ENCODE measurements at regions of chr1 and their contacts with region 1.

Region 1: DNA sequence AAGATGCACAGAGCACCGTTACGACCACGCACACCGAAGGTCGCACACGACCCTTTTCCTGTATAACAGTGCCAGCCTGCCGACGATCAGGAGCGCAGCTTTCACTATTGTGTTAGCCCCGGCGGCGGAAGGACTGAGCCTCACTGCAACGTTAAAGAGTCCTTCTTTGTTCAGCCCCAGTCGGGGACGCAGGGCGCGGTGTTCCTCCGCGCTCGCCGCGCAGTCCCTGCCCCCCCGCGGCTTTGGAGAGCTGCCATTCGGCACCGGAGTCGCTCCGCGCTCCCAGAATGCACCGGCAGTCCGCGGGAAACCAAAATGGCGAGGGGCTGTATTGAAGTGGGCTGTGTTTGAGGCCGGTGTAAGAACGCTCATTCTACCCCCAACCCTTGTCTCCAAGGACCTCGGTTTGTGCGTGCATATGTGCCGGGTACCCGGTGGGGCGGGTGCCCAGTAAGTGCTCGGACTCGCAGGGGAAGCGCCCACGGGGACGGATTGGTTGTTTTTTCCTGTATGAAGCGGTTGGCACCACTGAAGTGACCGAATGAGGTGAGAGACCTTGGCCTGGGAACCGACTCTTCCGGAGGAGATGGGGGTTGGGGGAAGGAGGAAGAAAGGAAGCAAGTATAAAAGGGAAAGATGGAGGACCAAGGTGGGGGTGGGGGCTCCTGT is at the start of gene MTF2:
- DNase-seq: peak; percentile 84
- ATAC-seq: peak; percentile 84
- H3K4me3 ChIP-seq: peak within 1 kb of the TSS; percentile 96
- H3K27ac ChIP-seq: peak within 1 kb of the TSS; percentile 93
- H3K4me1 ChIP-seq: no peaks in the 10 kb centered on the region
- H3K27me3 ChIP-seq: no peaks in the 10 kb centered on the region
- CTCF ChIP-seq: 0 out of 6 replicates have a peak, but pooled peaks of 1 of the 3 experiments have one; percentile 1
- EP300 ChIP-seq: peak; percentile 42 to 48; a peak in 3 of 4 replicates
- POLR2A ChIP-seq: peak; percentile 97
- RAD21 ChIP-seq: no peak
- polyA plus RNA-seq, gene MTF2: 22.6 to 30.6 TPM

Region 2: DNA sequence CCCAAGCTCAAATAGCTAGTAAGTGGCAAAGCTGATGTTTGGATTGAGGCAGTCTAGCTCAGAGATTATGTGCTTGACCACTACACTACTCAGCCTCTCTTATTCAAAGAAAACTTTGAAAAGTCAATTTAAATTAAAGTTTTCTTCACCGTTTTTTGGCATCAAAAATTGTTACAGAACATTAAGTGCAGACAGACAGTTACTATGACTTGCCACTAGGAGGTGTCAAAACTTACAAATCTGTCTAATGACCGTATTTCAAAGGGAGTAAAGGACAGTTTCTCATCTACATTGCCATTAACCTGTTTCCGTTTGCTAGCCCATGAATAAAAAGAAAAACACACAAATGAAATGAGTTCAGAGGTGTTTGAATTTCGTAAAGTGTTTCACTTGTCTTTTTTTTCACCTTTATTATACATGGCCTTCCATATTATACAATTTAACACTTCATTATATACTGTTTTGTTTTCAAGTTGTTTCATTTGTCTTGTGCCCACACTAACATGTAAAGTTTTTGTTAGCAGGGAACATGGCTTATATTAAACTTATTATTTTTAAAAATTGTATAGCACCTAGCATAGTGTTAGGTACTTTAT is 57.5 kb before region 1 on chr1:
- CTCF ChIA-PET with region 1: interaction called, 19 read pairs
- POLR2A ChIA-PET with region 1: no interaction called
- RAD21 ChIA-PET with region 1: interaction called, 4 read pairs
- SMC1A ChIA-PET with region 1: interaction called, 7 read pairs
- in situ Hi-C with region 1: no loop called
- intact Hi-C with region 1: no loop called
- DNase-seq: no peak
- ATAC-seq: peak; percentile 94
- H3K4me3 ChIP-seq: no peak overlapping the region
- H3K27ac ChIP-seq: no peak overlapping the region
- H3K4me1 ChIP-seq: no peaks in the 10 kb centered on the region; the same call in 1 of the 2 replicates
- H3K27me3 ChIP-seq: no peaks in the 10 kb centered on the region; a peak in 1 of 4 replicates
- CTCF ChIP-seq: peak; percentile 70 to 78 (median 71)
- EP300 ChIP-seq: no peak
- POLR2A ChIP-seq: no peak
- RAD21 ChIP-seq: peak; percentile 93

Region 3: GRCh38 chr1:93061895-93062792 is 17.0 kb before region 1 on chr1:
- CTCF ChIA-PET with region 1: interaction called, 19 read pairs
- POLR2A ChIA-PET with region 1: interaction called, 9 read pairs
- RAD21 ChIA-PET with region 1: interaction called, 17 read pairs
- SMC1A ChIA-PET with region 1: interaction called, 15 read pairs
- in situ Hi-C with region 1: no loop called
- intact Hi-C with region 1: no loop called
- DNase-seq: no peak
- ATAC-seq: peak; percentile 99
- H3K4me3 ChIP-seq: no peak overlapping the region
- H3K27ac ChIP-seq: no peak overlapping the region
- H3K4me1 ChIP-seq: no peaks in the 10 kb centered on the region
- H3K27me3 ChIP-seq: no peaks in the 10 kb centered on the region; a peak in 1 of 4 replicates
- CTCF ChIP-seq: peak; percentile 67 to 83 (median 72)
- EP300 ChIP-seq: no peak
- POLR2A ChIP-seq: no peak
- RAD21 ChIP-seq: peak; percentile 90

Region 4: GRCh38 chr1:93109578-93109977 is 30.5 kb after region 1 on chr1:
- CTCF ChIA-PET with region 1: interaction called, 11 read pairs
- POLR2A ChIA-PET with region 1: no interaction called
- RAD21 ChIA-PET with region 1: interaction called, 3 read pairs
- SMC1A ChIA-PET with region 1: interaction called, 4 read pairs
- in situ Hi-C with region 1: no loop called
- intact Hi-C with region 1: no loop called
- DNase-seq: no peak
- ATAC-seq: no peak
- H3K4me3 ChIP-seq: no peak overlapping the region
- H3K27ac ChIP-seq: no peak overlapping the region
- H3K4me1 ChIP-seq: peaks cover 5% of the 10 kb centered on the region; the same call in 1 of the 2 replicates
- H3K27me3 ChIP-seq: no peaks in the 10 kb centered on the region
- CTCF ChIP-seq: no peak
- EP300 ChIP-seq: no peak
- POLR2A ChIP-seq: no peak
- RAD21 ChIP-seq: no peak

Region 5: GRCh38 chr1:93171549-93172034 is 92.5 kb after region 1 on chr1:
- CTCF ChIA-PET with region 1: interaction called, 3 read pairs
- POLR2A ChIA-PET with region 1: interaction called, 3 read pairs
- RAD21 ChIA-PET with region 1: interaction called, 14 read pairs
- SMC1A ChIA-PET with region 1: interaction called, 17 read pairs
- in situ Hi-C with region 1: no loop called
- intact Hi-C with region 1: no loop called
- DNase-seq: no peak
- ATAC-seq: peak; percentile 28
- H3K4me3 ChIP-seq: peak overlapping the region; percentile 43
- H3K27ac ChIP-seq: peak overlapping the region; percentile 31; the same call in 1 of the 2 replicates
- H3K4me1 ChIP-seq: peaks cover 5% of the 10 kb centered on the region; the same call in 1 of the 2 replicates
- H3K27me3 ChIP-seq: no peaks in the 10 kb centered on the region
- CTCF ChIP-seq: no peak
- EP300 ChIP-seq: no peak
- POLR2A ChIP-seq: no peak
- RAD21 ChIP-seq: no peak

Region 6: GRCh38 chr1:93219443-93219842 is 140.3 kb after region 1 on chr1:
- CTCF ChIA-PET with region 1: interaction called, 6 read pairs
- POLR2A ChIA-PET with region 1: interaction called, 3 read pairs
- RAD21 ChIA-PET with region 1: interaction called, 10 read pairs
- SMC1A ChIA-PET with region 1: no interaction called
- in situ Hi-C with region 1: no loop called
- intact Hi-C with region 1: no loop called
- DNase-seq: peak; percentile 16
- ATAC-seq: peak; percentile 79
- H3K4me3 ChIP-seq: no peak overlapping the region
- H3K27ac ChIP-seq: peak overlapping the region; percentile 58; the same call in 1 of the 2 replicates
- H3K4me1 ChIP-seq: peaks cover 4% of the 10 kb centered on the region; the same call in 1 of the 2 replicates
- H3K27me3 ChIP-seq: no peaks in the 10 kb centered on the region
- CTCF ChIP-seq: no peak
- EP300 ChIP-seq: no peak
- POLR2A ChIP-seq: no peak
- RAD21 ChIP-seq: no peak

Region 7: DNA sequence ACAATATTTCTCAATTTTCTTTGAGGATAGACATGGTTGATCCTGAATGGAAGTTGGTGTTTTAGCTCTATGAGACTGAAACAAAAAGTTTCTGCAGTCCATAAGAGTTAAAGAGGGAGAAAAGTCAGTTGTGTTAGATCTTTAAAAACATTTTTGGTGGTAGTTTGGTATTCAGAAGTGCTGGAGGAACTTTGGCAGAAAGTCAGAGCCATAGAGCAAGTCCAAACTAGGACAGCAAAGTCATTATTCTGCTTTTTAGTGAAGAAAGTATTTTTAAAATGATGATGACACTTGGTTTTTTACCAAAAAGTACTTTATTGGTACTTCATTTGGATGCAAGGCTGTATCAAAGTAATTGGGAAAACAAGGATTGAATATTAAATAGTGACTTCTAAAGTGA is 410.6 kb after region 1 on chr1:
- CTCF ChIA-PET with region 1: no interaction called
- POLR2A ChIA-PET with region 1: no interaction called
- RAD21 ChIA-PET with region 1: no interaction called
- SMC1A ChIA-PET with region 1: no interaction called
- in situ Hi-C with region 1: no loop called
- intact Hi-C with region 1: no loop called
- DNase-seq: no peak
- ATAC-seq: no peak
- H3K4me3 ChIP-seq: no peak overlapping the region
- H3K27ac ChIP-seq: no peak overlapping the region
- H3K4me1 ChIP-seq: no peaks in the 10 kb centered on the region
- H3K27me3 ChIP-seq: peaks cover 0 to 2% of the 10 kb centered on the region in 2 experiments; a peak in 1 of 4 replicates
- CTCF ChIP-seq: no peak
- EP300 ChIP-seq: no peak
- POLR2A ChIP-seq: no peak
- RAD21 ChIP-seq: no peak

Region 8: DNA sequence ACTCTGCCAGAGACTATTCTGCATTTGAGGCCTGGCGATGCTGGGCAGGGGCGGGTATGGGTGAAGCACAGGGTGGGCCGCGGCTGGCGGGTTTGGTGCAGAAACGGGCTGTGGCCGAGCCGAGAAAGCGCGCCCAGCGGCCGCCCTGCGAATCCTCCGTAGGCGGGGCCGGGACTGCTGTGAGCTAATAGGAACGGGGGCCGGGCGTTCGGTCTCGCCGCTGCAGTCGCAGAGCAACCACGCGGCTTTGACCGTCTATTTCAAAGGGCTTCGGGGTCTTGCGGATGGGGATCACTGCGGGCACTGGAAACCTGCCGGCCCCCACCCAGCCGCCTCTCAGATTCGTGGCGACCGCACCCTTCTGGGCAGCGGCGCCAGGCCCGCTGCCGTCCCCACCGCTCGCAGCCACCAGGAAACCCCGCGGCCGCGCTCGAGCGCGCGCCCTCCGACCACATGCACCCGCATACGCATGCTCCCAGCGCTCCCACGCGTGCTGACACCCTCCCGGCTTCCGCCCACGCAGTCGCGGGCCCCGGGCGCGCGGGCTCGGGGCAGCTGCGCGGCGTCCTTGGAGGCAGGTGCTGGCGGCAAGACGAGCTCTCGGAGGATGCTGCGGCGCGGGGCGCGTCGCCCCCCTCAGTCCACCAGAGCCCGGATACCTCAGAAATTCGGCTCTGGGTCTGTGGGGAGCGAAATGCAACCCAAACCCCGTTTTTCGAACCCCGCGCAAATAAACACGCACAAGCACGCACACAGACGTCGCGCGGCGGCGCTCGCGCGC is 767.3 kb after region 1 on chr1:
- CTCF ChIA-PET with region 1: interaction called, 10 read pairs
- POLR2A ChIA-PET with region 1: no interaction called
- RAD21 ChIA-PET with region 1: interaction called, 6 read pairs
- SMC1A ChIA-PET with region 1: interaction called, 4 read pairs
- in situ Hi-C with region 1: no loop called
- intact Hi-C with region 1: no loop called
- DNase-seq: no peak
- ATAC-seq: peak; percentile 78
- H3K4me3 ChIP-seq: peak overlapping the region; percentile 84
- H3K27ac ChIP-seq: peak overlapping the region; percentile 69
- H3K4me1 ChIP-seq: peaks cover 6% of the 10 kb centered on the region
- H3K27me3 ChIP-seq: no peaks in the 10 kb centered on the region
- CTCF ChIP-seq: peak; percentile 17 to 44 (median 24); a peak in 3 of 6 replicates
- EP300 ChIP-seq: no peak
- POLR2A ChIP-seq: peak; percentile 75
- RAD21 ChIP-seq: no peak

Measured in GM12878 (cell line).